ENCODE measurements at regions of chr6 and their contacts with region 1.

Region 1: GRCh38 chr6:14210663-14211561 is 93.3 kb downstream of the CD83 start:
- DNase-seq: peak; percentile 75 to 96 (median 86)
- ATAC-seq: peak; percentile 86
- H3K4me3 ChIP-seq: peak overlapping the region; percentile 78
- H3K4me3 Mint-ChIP-seq: peak overlapping the region; percentile 91
- H3K27ac ChIP-seq: no peak overlapping the region
- H3K27ac Mint-ChIP-seq: peak overlapping the region; percentile 62
- H3K4me1 ChIP-seq: peaks cover 22% of the 10 kb centered on the region
- H3K4me1 Mint-ChIP-seq: peaks cover 13% of the 10 kb centered on the region
- H3K27me3 ChIP-seq: no peaks in the 10 kb centered on the region
- H3K27me3 Mint-ChIP-seq: no peaks in the 10 kb centered on the region
- CTCF ChIP-seq: peak; percentile 62

Region 2: DNA sequence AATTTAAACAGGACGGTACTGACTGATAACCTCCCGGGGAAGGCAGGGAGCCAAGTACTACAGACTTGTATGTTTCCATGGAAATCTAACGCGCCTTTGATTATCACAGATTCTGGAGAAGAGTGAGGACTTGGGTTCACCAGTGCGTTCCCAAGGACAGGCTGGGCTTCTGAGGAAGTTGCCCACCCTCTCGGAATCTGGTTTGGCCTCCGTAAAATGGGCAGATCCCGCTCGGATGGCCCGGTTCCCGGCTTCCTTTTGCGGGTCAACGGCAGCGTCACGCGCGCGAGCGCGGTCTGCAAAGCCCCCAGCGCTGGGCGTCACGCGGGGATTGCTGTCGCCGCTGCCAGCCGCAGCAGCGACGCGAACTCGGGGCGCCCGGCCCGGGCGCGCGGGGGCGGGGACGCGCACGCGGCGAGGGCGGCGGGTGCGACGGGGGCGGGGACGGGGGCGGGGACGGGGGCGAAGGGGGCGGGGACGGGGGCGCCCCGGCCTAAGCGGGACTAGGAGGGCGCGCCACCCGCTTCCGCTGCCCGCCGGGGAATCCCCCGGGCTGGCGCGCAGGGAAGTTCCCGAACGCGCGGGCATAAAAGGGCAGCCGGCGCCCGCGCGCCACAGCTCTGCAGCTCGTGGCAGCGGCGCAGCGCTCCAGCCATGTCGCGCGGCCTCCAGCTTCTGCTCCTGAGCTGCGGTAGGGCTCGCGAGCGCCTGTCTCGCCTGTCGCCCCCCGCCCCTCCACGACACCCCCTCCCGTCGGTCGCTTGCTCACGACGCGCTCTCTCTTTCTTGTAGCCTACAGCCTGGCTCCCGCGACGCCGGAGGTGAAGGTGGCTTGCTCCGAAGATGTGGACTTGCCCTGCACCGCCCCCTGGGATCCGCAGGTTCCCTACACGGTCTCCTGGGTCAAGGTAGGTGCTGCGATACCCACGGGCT is 93.5 kb before region 1 on chr6 and contains the start of gene CD83:
- CTCF ChIA-PET with region 1: no interaction called
- POLR2A ChIA-PET with region 1: no interaction called
- intact Hi-C with region 1: loop called in 1 of 2 experiments (anchors 5 kb)
- DNase-seq: peak; percentile 65 to 97 (median 82)
- ATAC-seq: peak; percentile 96
- H3K4me3 ChIP-seq: peak within 1 kb of the TSS; percentile 98
- H3K4me3 Mint-ChIP-seq: peak within 1 kb of the TSS; percentile 96
- H3K27ac ChIP-seq: peak within 1 kb of the TSS; percentile 64 to 76
- H3K27ac Mint-ChIP-seq: peak within 1 kb of the TSS; percentile 94
- H3K4me1 ChIP-seq: peaks cover 19% of the 10 kb centered on the region
- H3K4me1 Mint-ChIP-seq: peaks cover 48% of the 10 kb centered on the region
- H3K27me3 ChIP-seq: no peaks in the 10 kb centered on the region
- H3K27me3 Mint-ChIP-seq: no peaks in the 10 kb centered on the region
- CTCF ChIP-seq: no peak
- total RNA-seq, gene CD83: 35.3 to 36.4 TPM

Region 3: GRCh38 chr6:14178083-14178445 is 32.8 kb before region 1 on chr6:
- CTCF ChIA-PET with region 1: no interaction called
- POLR2A ChIA-PET with region 1: no interaction called
- intact Hi-C with region 1: no loop called
- DNase-seq: no peak
- ATAC-seq: no peak
- H3K4me3 ChIP-seq: no peak overlapping the region
- H3K4me3 Mint-ChIP-seq: no peak overlapping the region
- H3K27ac ChIP-seq: no peak overlapping the region
- H3K27ac Mint-ChIP-seq: no peak overlapping the region
- H3K4me1 ChIP-seq: no peaks in the 10 kb centered on the region
- H3K4me1 Mint-ChIP-seq: peaks cover 7% of the 10 kb centered on the region
- H3K27me3 ChIP-seq: no peaks in the 10 kb centered on the region
- H3K27me3 Mint-ChIP-seq: no peaks in the 10 kb centered on the region
- CTCF ChIP-seq: no peak

Region 4: DNA sequence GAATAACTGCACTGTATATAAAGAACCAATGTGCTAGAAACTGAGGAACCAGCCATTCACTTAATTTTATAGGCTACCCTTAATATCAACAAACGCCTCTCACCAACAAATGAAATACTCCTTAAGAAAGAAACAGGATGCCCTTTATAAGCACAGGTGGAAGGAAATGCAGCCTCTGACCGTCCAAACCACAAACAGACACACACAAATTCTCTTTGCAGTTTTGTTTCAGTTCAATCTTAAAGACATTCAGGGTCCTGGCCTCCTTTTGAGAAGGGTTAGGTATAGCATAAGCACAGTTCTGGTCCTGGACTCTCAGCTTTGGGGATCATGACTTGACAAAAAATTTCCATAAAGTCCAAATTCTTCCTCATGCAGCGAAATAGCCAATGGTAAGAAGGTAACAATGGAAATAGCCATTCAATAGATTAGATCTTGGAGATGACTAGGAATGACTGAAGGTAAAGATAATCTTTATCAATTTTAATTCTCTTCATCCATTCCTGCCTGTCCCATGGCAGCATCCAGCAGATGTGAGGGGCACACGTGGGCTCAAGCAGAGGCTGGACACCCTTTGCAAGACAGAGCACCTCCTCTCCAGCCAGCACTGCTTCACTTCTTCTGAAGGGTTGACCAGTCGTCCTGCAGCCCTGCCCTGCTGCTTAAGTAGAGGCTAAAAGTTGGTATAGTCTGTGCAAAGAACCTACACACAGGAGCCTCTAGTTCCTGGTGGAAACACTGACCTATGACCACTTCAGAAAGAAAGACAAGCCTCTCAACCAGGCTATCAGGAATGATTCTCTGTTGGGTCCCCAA is 30.6 kb after region 1 on chr6:
- CTCF ChIA-PET with region 1: no interaction called
- POLR2A ChIA-PET with region 1: no interaction called
- intact Hi-C with region 1: no loop called
- DNase-seq: no peak
- ATAC-seq: no peak
- H3K4me3 ChIP-seq: no peak overlapping the region
- H3K4me3 Mint-ChIP-seq: no peak overlapping the region
- H3K27ac ChIP-seq: no peak overlapping the region
- H3K27ac Mint-ChIP-seq: no peak overlapping the region
- H3K4me1 ChIP-seq: no peaks in the 10 kb centered on the region
- H3K4me1 Mint-ChIP-seq: peaks cover 6% of the 10 kb centered on the region
- H3K27me3 ChIP-seq: no peaks in the 10 kb centered on the region
- H3K27me3 Mint-ChIP-seq: no peaks in the 10 kb centered on the region
- CTCF ChIP-seq: no peak

Region 5: GRCh38 chr6:14316635-14317386 is 105.9 kb after region 1 on chr6:
- CTCF ChIA-PET with region 1: no interaction called
- POLR2A ChIA-PET with region 1: interaction called, 3 read pairs
- intact Hi-C with region 1: loop called in 1 of 2 experiments (anchors 2 kb)
- DNase-seq: peak in 4 of 14 experiments; percentile 3 to 33 (median 28)
- ATAC-seq: no peak
- H3K4me3 ChIP-seq: no peak overlapping the region
- H3K4me3 Mint-ChIP-seq: no peak overlapping the region
- H3K27ac ChIP-seq: no peak overlapping the region
- H3K27ac Mint-ChIP-seq: no peak overlapping the region
- H3K4me1 ChIP-seq: peaks cover 7% of the 10 kb centered on the region
- H3K4me1 Mint-ChIP-seq: peaks cover 13% of the 10 kb centered on the region
- H3K27me3 ChIP-seq: no peaks in the 10 kb centered on the region
- H3K27me3 Mint-ChIP-seq: no peaks in the 10 kb centered on the region
- CTCF ChIP-seq: peak; percentile 20

Region 6: DNA sequence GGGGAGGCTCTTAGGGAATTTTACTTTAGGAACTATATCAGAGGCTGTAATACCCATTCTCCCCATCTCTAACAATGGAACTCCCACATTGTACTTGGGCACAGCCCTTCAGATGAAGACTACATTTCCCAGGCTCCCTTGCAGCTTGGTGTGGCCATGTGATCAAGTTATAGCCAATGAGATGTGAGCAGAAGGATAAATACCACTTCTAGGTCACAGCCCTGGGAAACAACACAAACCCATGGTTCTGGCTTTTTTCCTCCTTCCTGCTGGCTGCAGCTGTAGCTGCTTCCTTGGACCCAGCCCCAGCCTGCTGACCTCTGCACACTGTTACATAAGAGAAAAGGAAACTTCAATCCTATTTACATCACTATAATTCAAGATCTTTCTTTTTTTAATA is 589.0 kb after region 1 on chr6:
- CTCF ChIA-PET with region 1: no interaction called
- POLR2A ChIA-PET with region 1: no interaction called
- intact Hi-C with region 1: loop called in 1 of 2 experiments (anchors 10 kb)
- DNase-seq: peak in 4 of 14 experiments; percentile 17 to 70 (median 59)
- ATAC-seq: peak; percentile 74
- H3K4me3 ChIP-seq: no peak overlapping the region
- H3K4me3 Mint-ChIP-seq: no peak overlapping the region
- H3K27ac ChIP-seq: no peak overlapping the region
- H3K27ac Mint-ChIP-seq: no peak overlapping the region
- H3K4me1 ChIP-seq: no peaks in the 10 kb centered on the region
- H3K4me1 Mint-ChIP-seq: peaks cover 5% of the 10 kb centered on the region
- H3K27me3 ChIP-seq: peaks cover 0 to 3% of the 10 kb centered on the region in 2 experiments
- H3K27me3 Mint-ChIP-seq: no peaks in the 10 kb centered on the region
- CTCF ChIP-seq: no peak

Region 7: GRCh38 chr6:15245361-15246216 is 1034.7 kb after region 1 on chr6 and contains the start of gene JARID2:
- CTCF ChIA-PET with region 1: no interaction called
- POLR2A ChIA-PET with region 1: interaction called, 3 read pairs
- intact Hi-C with region 1: loop called (anchors 2 to 5 kb)
- DNase-seq: peak; percentile 87 to 98 (median 93)
- ATAC-seq: peak; percentile 39
- H3K4me3 ChIP-seq: peak within 1 kb of the TSS; percentile 94
- H3K4me3 Mint-ChIP-seq: peak within 1 kb of the TSS; percentile 100
- H3K27ac ChIP-seq: peak within 1 kb of the TSS; percentile 81 to 92
- H3K27ac Mint-ChIP-seq: peak within 1 kb of the TSS; percentile 97
- H3K4me1 ChIP-seq: peaks cover 25% of the 10 kb centered on the region
- H3K4me1 Mint-ChIP-seq: peaks cover 24% of the 10 kb centered on the region
- H3K27me3 ChIP-seq: no peaks in the 10 kb centered on the region
- H3K27me3 Mint-ChIP-seq: peaks cover 4% of the 10 kb centered on the region
- CTCF ChIP-seq: no peak
- total RNA-seq, gene JARID2: 32.0 to 33.0 TPM

Region 8: GRCh38 chr6:15441215-15441868 is 1230.4 kb after region 1 on chr6:
- CTCF ChIA-PET with region 1: no interaction called
- POLR2A ChIA-PET with region 1: no interaction called
- intact Hi-C with region 1: loop called (anchors 1 to 2 kb)
- DNase-seq: peak in 11 of 14 experiments; percentile 7 to 73 (median 16)
- ATAC-seq: peak; percentile 69
- H3K4me3 ChIP-seq: no peak overlapping the region
- H3K4me3 Mint-ChIP-seq: no peak overlapping the region
- H3K27ac ChIP-seq: no peak overlapping the region
- H3K27ac Mint-ChIP-seq: no peak overlapping the region
- H3K4me1 ChIP-seq: peaks cover 21% of the 10 kb centered on the region
- H3K4me1 Mint-ChIP-seq: peaks cover 89% of the 10 kb centered on the region
- H3K27me3 ChIP-seq: no peaks in the 10 kb centered on the region
- H3K27me3 Mint-ChIP-seq: no peaks in the 10 kb centered on the region
- CTCF ChIP-seq: peak; percentile 86

Region 9: DNA sequence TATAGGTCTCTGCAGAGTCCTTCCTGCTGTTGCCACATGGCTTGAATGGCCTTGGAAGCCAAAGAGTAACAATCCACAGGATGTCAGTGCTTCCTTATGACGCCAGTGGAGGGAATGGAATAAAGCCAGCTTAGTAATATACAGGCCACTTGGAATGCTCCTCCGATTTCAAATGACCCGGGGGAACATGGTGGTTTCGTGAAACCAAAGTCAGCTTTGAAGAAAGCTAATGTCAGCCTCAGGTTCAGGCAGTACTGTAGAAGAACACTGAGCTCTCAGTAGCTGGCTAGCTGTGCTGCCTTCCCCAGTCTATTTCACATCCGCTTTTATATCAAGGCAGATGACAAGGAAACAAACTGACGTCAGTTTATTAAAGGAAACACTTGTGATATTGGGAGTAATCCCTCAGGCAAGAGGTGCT is 1262.8 kb after region 1 on chr6:
- CTCF ChIA-PET with region 1: no interaction called
- POLR2A ChIA-PET with region 1: no interaction called
- intact Hi-C with region 1: no loop called
- DNase-seq: no peak
- ATAC-seq: no peak
- H3K4me3 ChIP-seq: no peak overlapping the region
- H3K4me3 Mint-ChIP-seq: no peak overlapping the region
- H3K27ac ChIP-seq: no peak overlapping the region
- H3K27ac Mint-ChIP-seq: no peak overlapping the region
- H3K4me1 ChIP-seq: no peaks in the 10 kb centered on the region
- H3K4me1 Mint-ChIP-seq: peaks cover 37% of the 10 kb centered on the region
- H3K27me3 ChIP-seq: no peaks in the 10 kb centered on the region
- H3K27me3 Mint-ChIP-seq: no peaks in the 10 kb centered on the region
- CTCF ChIP-seq: no peak

Region 10: DNA sequence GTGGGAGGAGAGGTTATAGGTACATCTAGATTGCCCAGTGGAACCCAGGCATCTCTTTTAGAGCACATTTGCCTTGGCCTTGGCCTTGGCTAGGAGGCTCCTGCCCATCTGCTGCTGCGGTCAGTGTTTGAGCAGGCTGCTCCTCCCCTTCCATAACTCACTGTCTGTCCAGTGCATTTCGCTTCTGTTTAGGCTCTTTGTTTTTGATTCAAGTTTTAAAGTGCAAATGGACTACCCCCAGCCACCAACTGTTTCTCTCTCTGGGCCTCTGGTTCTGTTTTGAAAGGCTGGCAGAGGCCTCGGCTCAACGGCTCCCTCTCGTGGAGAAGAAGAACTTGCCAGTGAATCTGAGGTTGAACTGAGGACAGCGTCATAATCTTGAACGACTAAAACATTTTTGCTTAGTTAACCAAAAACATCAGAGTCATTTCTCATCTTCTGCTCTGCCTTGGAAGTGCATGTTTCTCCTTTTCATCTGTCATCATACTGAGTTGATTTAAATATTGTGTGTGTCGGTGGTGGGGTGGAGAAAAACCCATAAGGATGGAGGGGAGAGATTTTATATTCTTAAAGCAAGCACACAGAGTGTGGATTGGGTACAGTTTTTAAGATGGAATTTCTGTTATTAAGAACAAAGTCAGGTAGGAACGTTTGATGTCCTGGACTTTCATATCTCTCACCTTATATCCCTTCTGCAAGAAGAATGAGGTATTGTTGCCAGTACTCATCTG is 1280.5 kb after region 1 on chr6:
- CTCF ChIA-PET with region 1: no interaction called
- POLR2A ChIA-PET with region 1: no interaction called
- intact Hi-C with region 1: loop called (anchors 1 to 2 kb)
- DNase-seq: peak; percentile 52 to 80 (median 62)
- ATAC-seq: peak; percentile 84
- H3K4me3 ChIP-seq: no peak overlapping the region
- H3K4me3 Mint-ChIP-seq: no peak overlapping the region
- H3K27ac ChIP-seq: no peak overlapping the region
- H3K27ac Mint-ChIP-seq: peak overlapping the region; percentile 28
- H3K4me1 ChIP-seq: peaks cover 7% of the 10 kb centered on the region
- H3K4me1 Mint-ChIP-seq: peaks cover 47% of the 10 kb centered on the region
- H3K27me3 ChIP-seq: no peaks in the 10 kb centered on the region
- H3K27me3 Mint-ChIP-seq: no peaks in the 10 kb centered on the region
- CTCF ChIP-seq: peak; percentile 85